Dorsolateral prefrontal cortex (tissue), 120 donors: ENCODE measurements at regions of chr20 and their contacts with region 1.

Region 1: DNA sequence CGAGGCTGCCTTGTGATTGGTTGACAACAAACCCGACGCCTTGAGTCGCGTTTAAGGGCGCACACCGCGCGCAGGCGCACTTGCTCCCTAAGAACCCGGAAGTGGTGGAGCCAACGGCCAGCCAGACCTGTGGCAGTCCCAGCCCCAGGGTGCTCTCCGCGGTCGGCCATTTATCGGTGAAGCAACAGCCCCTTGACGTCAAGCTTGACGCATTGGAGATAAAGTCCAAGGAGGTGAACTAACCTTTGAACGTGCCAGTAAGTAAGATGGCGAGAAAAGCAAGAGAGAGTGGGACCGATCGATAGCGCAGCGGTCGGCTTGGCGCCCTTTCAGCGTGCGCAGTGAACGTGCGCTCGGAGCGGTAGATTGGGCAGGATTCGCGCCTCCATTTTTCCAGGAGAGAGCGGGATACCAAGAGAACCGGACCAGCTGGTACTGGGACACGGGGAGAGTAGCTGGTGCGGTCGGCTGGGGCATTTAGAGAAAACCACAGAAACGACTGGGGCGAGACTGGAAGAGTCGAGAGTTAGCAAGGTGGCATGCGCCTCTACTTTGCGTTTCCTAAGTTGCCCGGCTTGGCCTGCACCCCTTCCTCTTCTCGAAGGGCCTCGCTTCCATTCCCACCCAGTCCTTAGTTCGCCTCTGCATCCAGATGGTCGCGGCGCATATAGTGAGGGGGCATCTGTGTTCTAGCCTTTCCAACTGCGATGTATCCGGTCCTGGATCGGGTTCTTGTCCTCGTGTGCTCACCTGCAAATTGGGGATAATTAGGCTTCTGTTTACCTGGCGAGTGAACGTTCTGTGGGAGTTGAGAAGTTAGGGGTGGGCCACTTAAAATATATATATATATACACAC is at the start of gene CSTF1:
- DNase-seq: peak; percentile 97 to 99 (median 99)
- H3K4me3 ChIP-seq: peak within 1 kb of the TSS; percentile 60 to 99 (median 91)
- H3K27ac ChIP-seq: peak within 1 kb of the TSS; percentile 36 to 96 (median 89)
- H3K27me3 ChIP-seq: no peaks in the 10 kb centered on the region
- CTCF ChIP-seq: peak in 27 of 56 donors; percentile 5 to 61 (median 27)
- total RNA-seq, gene CSTF1: 15.8 to 37.3 (median 25.6) TPM

Region 2: DNA sequence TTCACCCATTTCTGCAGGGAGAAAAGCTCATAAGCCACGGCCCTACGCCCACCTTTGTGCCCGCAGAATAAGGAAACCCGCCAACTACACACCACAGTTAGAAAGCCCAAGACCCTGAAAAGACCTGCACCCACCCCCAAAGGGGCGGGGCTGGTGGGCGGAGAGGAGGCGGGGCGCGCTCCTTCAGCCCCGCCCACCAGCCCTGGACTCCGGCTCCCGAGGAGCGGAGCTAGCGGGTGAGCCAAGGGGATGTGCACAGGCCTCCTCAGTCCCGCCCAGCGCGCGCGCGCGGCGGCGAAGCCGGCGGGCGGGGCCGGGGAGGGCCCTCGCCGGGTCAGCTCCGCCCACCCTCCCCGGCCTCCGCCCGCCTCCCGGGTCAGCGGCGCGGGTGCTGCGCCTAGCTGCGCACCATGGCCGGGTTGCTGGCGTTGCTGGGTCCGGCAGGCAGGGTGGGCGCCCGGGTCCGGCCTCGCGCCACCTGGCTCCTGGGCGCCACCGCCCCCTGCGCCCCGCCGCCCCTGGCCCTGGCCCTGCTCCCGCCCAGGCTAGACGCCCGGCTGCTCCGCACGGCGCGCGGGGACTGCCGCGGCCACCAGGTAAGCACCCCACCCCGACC is 33.8 kb before region 1 on chr20 and contains the start of gene FAM210B:
- intact Hi-C with region 1: loop called (anchors 1 kb)
- DNase-seq: peak; percentile 66 to 94 (median 86)
- H3K4me3 ChIP-seq: peak within 1 kb of the TSS; percentile 69 to 98 (median 89)
- H3K27ac ChIP-seq: peak within 1 kb of the TSS in 53 of 59 donors; percentile 23 to 89 (median 73)
- H3K27me3 ChIP-seq: no peaks in the 10 kb centered on the region
- CTCF ChIP-seq: peak in 6 of 56 donors; percentile 9 to 24 (median 17)
- total RNA-seq, gene FAM210B: 19.5 to 41.4 (median 28.6) TPM

Region 3: GRCh38 chr20:56468316-56469082 is 76.0 kb after region 1 on chr20 and contains the start of gene RTF2:
- intact Hi-C with region 1: loop called (anchors 2 to 5 kb)
- DNase-seq: peak; percentile 89 to 99 (median 93)
- H3K4me3 ChIP-seq: peak within 1 kb of the TSS; percentile 43 to 99 (median 87)
- H3K27ac ChIP-seq: peak within 1 kb of the TSS in 57 of 59 donors; percentile 35 to 91 (median 80)
- H3K27me3 ChIP-seq: no peaks in the 10 kb centered on the region
- CTCF ChIP-seq: peak in 29 of 56 donors; percentile 7 to 55 (median 25)
- total RNA-seq, gene RTF2: 74.7 to 133 (median 99.7) TPM

Region 4: GRCh38 chr20:56516631-56517030 is 124.1 kb after region 1 on chr20:
- intact Hi-C with region 1: loop called in 1 of 2 experiments (anchors 5 kb)
- DNase-seq: peak in 5 of 10 donors; percentile 45 to 59 (median 52)
- H3K4me3 ChIP-seq: peak overlapping the region in 5 of 59 donors; percentile 8 to 34 (median 14)
- H3K27ac ChIP-seq: peak overlapping the region in 51 of 59 donors; percentile 2 to 86 (median 60)
- H3K27me3 ChIP-seq: no peaks in the 10 kb centered on the region
- CTCF ChIP-seq: no peak

Region 5: DNA sequence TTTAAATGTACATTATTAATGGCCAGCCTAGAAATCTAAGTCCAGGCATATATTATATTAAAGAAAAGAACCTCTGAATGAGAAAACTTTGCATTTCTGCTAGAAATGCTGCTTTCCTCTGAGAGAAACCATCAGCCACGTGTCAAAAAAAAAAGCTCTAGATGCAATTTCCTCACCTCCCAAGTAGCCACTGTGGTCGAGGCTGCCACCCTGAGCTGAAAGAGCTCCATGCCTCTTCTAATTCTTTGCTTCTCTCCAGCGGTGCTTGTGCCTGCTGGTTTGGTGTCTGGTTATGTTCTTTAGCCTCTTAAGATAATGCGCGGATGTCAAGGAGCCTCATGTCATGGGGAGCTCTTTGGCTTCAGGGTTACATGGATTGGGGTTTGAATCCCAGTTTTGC is 552.5 kb after region 1 on chr20:
- intact Hi-C with region 1: no loop called
- DNase-seq: no peak
- H3K4me3 ChIP-seq: no peak overlapping the region
- H3K27ac ChIP-seq: no peak overlapping the region
- H3K27me3 ChIP-seq: peaks cover 0 to 34% (median 4%) of the 10 kb centered on the region in 45 donors
- CTCF ChIP-seq: peak in 3 of 56 donors; percentile 10 to 28 (median 14)